Heart left ventricle (tissue), 16 donors: ENCODE measurements at regions of chr4 and their contacts with region 1.

Region 1: DNA sequence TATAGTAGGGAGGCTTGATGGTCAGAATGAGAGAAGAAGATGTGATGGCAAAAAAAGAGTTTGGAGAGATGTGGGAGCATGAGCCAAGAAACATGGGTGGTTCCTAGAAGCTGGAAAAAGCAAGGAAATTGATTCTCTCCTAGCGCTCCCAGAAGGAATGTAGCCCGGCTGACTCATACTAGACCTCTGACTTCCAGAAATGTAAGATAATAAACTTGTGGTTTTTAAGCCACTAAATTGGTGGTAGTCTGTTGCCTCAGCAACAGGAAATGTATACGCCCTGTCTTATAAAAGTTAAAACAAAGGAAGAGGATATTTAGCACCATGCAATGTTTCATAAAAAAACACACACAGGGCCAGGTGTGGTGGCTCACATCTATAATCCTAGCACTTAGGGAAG is 182.7 kb upstream of the PCDH7 start:
- DNase-seq: no peak
- ATAC-seq: peak in 3 of 4 donors; percentile 42 to 63 (median 57)
- H3K4me3 ChIP-seq: no peak overlapping the region
- H3K27ac ChIP-seq: no peak overlapping the region
- H3K4me1 ChIP-seq: no peaks in the 10 kb centered on the region
- H3K27me3 ChIP-seq: no peaks in the 10 kb centered on the region
- CTCF ChIP-seq: no peak
- POLR2A ChIP-seq: no peak

Region 2: DNA sequence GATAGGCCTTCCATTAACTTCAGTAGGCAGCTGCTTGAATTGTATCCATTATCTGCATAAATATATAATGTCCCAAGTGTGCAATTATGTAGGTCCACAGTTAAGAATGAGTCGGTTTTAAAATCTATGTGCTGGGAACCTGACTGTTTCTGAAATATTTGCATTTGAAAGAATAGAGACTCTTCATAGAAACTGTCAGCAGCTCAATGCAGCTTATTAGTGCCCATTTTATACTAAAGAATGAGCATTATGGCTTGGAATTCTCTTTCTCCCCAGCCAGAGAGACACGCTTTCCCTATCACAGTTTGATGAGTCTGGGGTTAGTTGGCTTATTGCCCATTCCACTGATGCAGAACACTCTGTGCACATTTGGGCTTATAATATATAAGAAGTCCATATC is 19.2 kb before region 1 on chr4:
- intact Hi-C with region 1: loop called in 1 of 10 experiments (anchors 1 kb)
- DNase-seq: no peak
- ATAC-seq: no peak
- H3K4me3 ChIP-seq: no peak overlapping the region
- H3K27ac ChIP-seq: no peak overlapping the region
- H3K4me1 ChIP-seq: no peaks in the 10 kb centered on the region
- H3K27me3 ChIP-seq: no peaks in the 10 kb centered on the region
- CTCF ChIP-seq: no peak
- POLR2A ChIP-seq: no peak